Activated naive CD4-positive, alpha-beta T cell treated with anti-CD3 and anti-CD28 coated beads, Interleukin-2, amount 10 ng/mL, durations not matched to agents 7 days and 5 days (primary cell): ENCODE measurements at regions of chr19 and their contacts with region 1.

Region 1: GRCh38 chr19:38402967-38403861 is at the start of gene FAM98C:
- DNase-seq: peak; percentile 97
- H3K4me3 Mint-ChIP-seq: peak within 1 kb of the TSS; percentile 92
- H3K27ac Mint-ChIP-seq: peak within 1 kb of the TSS; percentile 94
- H3K4me1 Mint-ChIP-seq: peaks cover 28% of the 10 kb centered on the region
- H3K27me3 Mint-ChIP-seq: peaks cover 19% of the 10 kb centered on the region

Region 2: GRCh38 chr19:38387550-38388348 is 15.5 kb before region 1 on chr19 and contains the start of gene GGN:
- CTCF ChIA-PET with region 1: interaction called, 17 read pairs
- DNase-seq: peak; percentile 87
- H3K4me3 Mint-ChIP-seq: peak within 1 kb of the TSS; percentile 75
- H3K27ac Mint-ChIP-seq: peak within 1 kb of the TSS; percentile 35
- H3K4me1 Mint-ChIP-seq: peaks cover 21% of the 10 kb centered on the region
- H3K27me3 Mint-ChIP-seq: peaks cover 85% of the 10 kb centered on the region

Region 3: DNA sequence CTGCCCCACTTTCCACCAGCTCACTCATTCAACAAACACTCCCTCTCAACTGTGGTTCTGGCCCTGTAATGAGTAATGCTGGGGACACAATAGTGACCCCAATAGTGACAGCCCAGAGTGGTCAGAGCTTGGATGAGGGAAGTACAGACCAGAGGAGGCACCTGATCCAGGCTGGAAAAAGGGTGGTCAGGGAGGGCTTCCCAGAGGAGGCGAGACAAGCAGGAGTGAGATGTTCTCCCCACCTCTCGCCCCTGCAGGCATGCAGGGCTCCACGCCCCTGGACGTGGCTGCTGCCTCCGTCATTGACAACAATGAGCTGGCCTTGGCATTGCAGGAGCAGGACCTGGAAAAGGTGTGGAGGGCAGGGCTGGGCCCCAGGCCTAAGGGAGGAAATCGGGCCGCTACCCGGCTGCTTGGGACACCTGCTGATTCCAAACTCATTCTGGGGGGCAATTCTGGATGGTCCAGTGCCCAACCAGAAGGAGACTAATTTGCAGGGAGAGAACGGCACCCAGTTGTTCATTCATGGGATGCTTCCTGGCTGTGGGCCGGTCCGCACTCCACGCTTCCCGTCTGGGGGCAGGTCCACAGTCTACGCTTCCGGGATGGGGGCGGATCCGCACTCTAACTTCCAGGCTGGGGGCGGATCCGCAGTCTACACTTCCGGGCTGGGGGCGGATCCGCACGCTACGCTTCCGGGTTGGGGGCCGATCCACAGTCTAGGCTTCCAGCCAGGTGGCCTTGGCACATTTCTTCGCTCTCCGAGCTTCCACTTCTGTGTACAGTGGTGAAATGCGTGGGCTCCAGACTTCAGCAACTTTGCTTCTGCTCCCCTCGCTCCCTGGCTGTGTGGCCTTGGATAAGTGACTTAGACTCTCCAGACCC is 93.6 kb after region 1 on chr19:
- CTCF ChIA-PET with region 1: no interaction called
- DNase-seq: no peak
- H3K4me3 Mint-ChIP-seq: no peak overlapping the region
- H3K27ac Mint-ChIP-seq: no peak overlapping the region
- H3K4me1 Mint-ChIP-seq: no peaks in the 10 kb centered on the region
- H3K27me3 Mint-ChIP-seq: peaks cover 22% of the 10 kb centered on the region

Region 4: GRCh38 chr19:38596057-38596981 is 193.1 kb after region 1 on chr19:
- CTCF ChIA-PET with region 1: no interaction called
- DNase-seq: peak; percentile 30
- H3K4me3 Mint-ChIP-seq: no peak overlapping the region
- H3K27ac Mint-ChIP-seq: peak overlapping the region; percentile 45
- H3K4me1 Mint-ChIP-seq: peaks cover 9% of the 10 kb centered on the region
- H3K27me3 Mint-ChIP-seq: no peaks in the 10 kb centered on the region

Region 5: DNA sequence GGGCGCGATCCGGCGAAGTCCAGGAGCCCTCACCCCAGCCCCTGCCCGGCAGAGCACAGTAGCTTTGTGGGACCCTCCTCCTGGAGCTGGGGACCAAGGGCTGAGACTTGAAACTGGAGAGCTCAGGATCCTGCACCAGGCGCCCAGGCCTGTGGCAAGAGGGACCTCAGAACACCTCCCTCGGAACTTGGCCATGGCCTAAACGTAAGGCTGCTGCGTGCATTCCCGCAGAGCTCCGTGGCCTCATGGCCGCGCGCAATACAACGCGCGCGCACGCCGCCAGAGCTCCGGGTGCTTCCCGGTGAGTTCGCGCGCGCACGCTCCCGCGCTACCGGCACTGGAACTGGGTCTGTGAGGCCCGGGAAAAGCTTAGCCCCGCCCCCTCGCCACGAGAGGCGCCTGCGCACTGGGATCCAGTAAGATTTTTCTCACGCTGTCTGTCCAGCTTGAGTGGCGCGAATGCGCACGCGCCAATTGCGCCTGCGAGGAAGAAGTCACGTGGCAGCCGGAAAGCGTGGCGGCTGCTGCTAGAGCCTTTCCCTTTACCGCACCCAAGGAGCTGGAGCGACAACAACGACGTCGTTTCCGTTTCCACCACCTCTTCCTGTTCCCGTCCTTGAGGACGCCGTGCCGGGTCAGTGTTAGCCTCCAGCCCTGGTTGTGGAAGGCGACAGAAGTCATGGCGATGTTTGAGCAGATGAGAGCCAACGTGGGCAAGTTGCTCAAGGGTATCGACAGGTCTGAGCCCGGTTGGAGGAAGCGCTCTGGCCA is 215.6 kb after region 1 on chr19 and contains the start of gene EIF3K:
- CTCF ChIA-PET with region 1: interaction called, 12 read pairs
- DNase-seq: peak; percentile 98
- H3K4me3 Mint-ChIP-seq: peak within 1 kb of the TSS; percentile 99
- H3K27ac Mint-ChIP-seq: peak within 1 kb of the TSS; percentile 94
- H3K4me1 Mint-ChIP-seq: peaks cover 61% of the 10 kb centered on the region
- H3K27me3 Mint-ChIP-seq: no peaks in the 10 kb centered on the region

Region 6: GRCh38 chr19:38891771-38892170 is 488.6 kb after region 1 on chr19:
- CTCF ChIA-PET with region 1: interaction called, 10 read pairs
- DNase-seq: no peak
- H3K4me3 Mint-ChIP-seq: no peak overlapping the region
- H3K27ac Mint-ChIP-seq: no peak overlapping the region
- H3K4me1 Mint-ChIP-seq: no peaks in the 10 kb centered on the region
- H3K27me3 Mint-ChIP-seq: no peaks in the 10 kb centered on the region